Activated CD4-positive, alpha-beta memory T cell treated with anti-CD3 and anti-CD28 coated beads for 36 hours (primary cell): ENCODE measurements at regions of chr5 and their contacts with region 1.

Region 1: DNA sequence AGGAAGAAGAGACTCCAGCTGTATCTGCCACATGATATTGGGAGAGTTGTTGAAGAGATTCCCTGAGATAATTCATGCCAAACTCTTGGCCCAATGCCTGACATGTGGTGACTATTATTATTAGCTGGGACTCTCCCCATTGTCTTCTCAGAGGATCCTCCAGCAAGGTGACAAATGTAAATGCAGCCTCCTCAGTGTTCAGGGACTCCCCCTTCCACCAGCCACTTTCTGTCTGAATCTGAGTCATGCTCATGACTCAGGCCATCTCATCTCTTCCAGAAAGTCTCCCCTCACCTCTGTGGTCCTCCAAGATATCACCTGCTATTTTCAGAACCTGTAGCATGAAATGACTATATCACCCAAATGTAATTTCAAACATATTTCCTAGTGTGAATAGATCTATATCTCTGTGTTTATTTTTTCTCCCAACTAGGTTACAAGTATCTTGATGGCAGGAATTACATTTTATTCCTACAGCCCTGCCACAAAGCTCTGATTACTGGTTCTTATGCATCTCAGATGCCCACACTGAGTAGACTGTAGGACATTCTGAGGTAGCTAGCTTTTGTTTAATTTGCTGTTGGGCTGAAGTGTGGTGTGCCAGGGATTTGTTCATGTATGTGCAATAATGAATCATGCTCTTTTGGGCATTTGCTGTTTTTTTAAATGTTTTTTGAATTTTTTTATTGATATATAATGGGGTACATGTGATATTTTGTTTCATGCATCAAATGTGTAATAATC is 126.6 kb upstream of the IL12B start:
- DNase-seq: peak; percentile 84
- H3K4me3 Mint-ChIP-seq: no peak overlapping the region
- H3K27ac Mint-ChIP-seq: no peak overlapping the region
- H3K4me1 Mint-ChIP-seq: peaks cover 43% of the 10 kb centered on the region
- H3K27me3 Mint-ChIP-seq: peaks cover 11% of the 10 kb centered on the region

Region 2: GRCh38 chr5:158875272-158875679 is 581.6 kb before region 1 on chr5:
- CTCF ChIA-PET with region 1: no interaction called
- POLR2A ChIA-PET with region 1: no interaction called
- intact Hi-C with region 1: loop called (anchors 5 kb)
- DNase-seq: no peak
- H3K4me3 Mint-ChIP-seq: no peak overlapping the region
- H3K27ac Mint-ChIP-seq: peak overlapping the region; percentile 39
- H3K4me1 Mint-ChIP-seq: peaks cover 27% of the 10 kb centered on the region
- H3K27me3 Mint-ChIP-seq: peaks cover 8% of the 10 kb centered on the region

Region 3: GRCh38 chr5:159209438-159210305 is 247.2 kb before region 1 on chr5 and contains the start of gene RNF145:
- CTCF ChIA-PET with region 1: no interaction called
- POLR2A ChIA-PET with region 1: no interaction called
- intact Hi-C with region 1: loop called (anchors 2 kb)
- DNase-seq: peak; percentile 94
- H3K4me3 Mint-ChIP-seq: peak within 1 kb of the TSS; percentile 99
- H3K27ac Mint-ChIP-seq: peak within 1 kb of the TSS; percentile 100
- H3K4me1 Mint-ChIP-seq: peaks cover 25% of the 10 kb centered on the region
- H3K27me3 Mint-ChIP-seq: no peaks in the 10 kb centered on the region
- total RNA-seq, gene RNF145: 91.4 to 92.6 TPM

Region 4: DNA sequence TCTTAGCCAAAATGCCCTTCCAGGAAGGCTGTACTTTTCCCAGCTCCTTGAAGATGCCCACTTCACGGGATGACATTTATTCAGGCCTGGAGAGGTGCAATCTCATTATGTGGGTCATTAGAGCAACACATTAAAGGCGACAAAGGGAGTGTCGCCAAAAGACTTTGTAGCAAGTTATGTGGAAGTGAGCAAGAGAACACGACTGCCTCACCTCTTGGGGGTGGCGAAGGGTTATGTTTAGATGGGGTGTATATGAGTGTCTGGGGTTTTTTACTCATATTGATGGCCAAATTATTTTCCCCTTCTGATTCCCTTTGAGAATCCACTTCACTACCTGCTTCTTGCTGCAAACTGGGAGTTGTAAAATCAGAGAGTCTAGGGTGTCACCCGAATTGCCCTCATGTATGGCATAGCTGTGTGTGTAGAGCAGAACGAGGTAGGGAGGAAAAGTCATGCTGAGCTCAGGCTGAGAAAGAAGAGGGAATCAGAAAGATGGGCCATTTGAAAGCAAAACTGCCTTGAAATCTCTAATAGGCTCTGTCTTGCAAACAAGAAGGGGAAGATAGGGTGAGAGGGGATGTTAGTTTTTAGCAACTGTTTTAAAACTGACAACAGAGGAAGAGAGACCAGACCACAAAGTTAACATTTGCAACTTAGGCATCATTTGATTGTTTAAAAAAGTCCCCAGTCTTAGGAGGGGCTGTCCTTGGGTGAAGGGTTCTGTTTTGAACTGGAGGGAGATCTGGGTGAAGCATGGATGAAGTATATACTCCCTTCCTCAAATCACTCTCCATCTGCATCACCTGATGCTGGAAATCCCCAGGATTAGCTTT is 29.5 kb before region 1 on chr5:
- CTCF ChIA-PET with region 1: interaction called, 3 read pairs
- POLR2A ChIA-PET with region 1: interaction called, 6 read pairs
- intact Hi-C with region 1: loop called (anchors 1 kb)
- DNase-seq: no peak
- H3K4me3 Mint-ChIP-seq: no peak overlapping the region
- H3K27ac Mint-ChIP-seq: no peak overlapping the region
- H3K4me1 Mint-ChIP-seq: peaks cover 26% of the 10 kb centered on the region
- H3K27me3 Mint-ChIP-seq: peaks cover 3% of the 10 kb centered on the region

Region 5: GRCh38 chr5:159605585-159605984 is 148.7 kb after region 1 on chr5:
- CTCF ChIA-PET with region 1: no interaction called
- POLR2A ChIA-PET with region 1: no interaction called
- intact Hi-C with region 1: loop called (anchors 5 kb)
- DNase-seq: no peak
- H3K4me3 Mint-ChIP-seq: no peak overlapping the region
- H3K27ac Mint-ChIP-seq: no peak overlapping the region
- H3K4me1 Mint-ChIP-seq: peaks cover 16% of the 10 kb centered on the region
- H3K27me3 Mint-ChIP-seq: no peaks in the 10 kb centered on the region

Region 6: GRCh38 chr5:159727167-159727566 is 270.3 kb after region 1 on chr5:
- CTCF ChIA-PET with region 1: no interaction called
- POLR2A ChIA-PET with region 1: no interaction called
- intact Hi-C with region 1: no loop called
- DNase-seq: no peak
- H3K4me3 Mint-ChIP-seq: no peak overlapping the region
- H3K27ac Mint-ChIP-seq: no peak overlapping the region
- H3K4me1 Mint-ChIP-seq: no peaks in the 10 kb centered on the region
- H3K27me3 Mint-ChIP-seq: peaks cover 10% of the 10 kb centered on the region

Region 7: GRCh38 chr5:160008877-160009590 is 552.1 kb after region 1 on chr5 and contains the start of gene TTC1:
- CTCF ChIA-PET with region 1: no interaction called
- POLR2A ChIA-PET with region 1: no interaction called
- intact Hi-C with region 1: loop called (anchors 2 kb)
- DNase-seq: peak; percentile 94
- H3K4me3 Mint-ChIP-seq: peak within 1 kb of the TSS; percentile 99
- H3K27ac Mint-ChIP-seq: peak within 1 kb of the TSS; percentile 95
- H3K4me1 Mint-ChIP-seq: peaks cover 22% of the 10 kb centered on the region
- H3K27me3 Mint-ChIP-seq: no peaks in the 10 kb centered on the region
- total RNA-seq, gene TTC1: 53.6 to 54.3 TPM